Endothelial cell of umbilical vein (primary cell): ENCODE measurements at regions of chr21 and their contacts with region 1.

Region 1: DNA sequence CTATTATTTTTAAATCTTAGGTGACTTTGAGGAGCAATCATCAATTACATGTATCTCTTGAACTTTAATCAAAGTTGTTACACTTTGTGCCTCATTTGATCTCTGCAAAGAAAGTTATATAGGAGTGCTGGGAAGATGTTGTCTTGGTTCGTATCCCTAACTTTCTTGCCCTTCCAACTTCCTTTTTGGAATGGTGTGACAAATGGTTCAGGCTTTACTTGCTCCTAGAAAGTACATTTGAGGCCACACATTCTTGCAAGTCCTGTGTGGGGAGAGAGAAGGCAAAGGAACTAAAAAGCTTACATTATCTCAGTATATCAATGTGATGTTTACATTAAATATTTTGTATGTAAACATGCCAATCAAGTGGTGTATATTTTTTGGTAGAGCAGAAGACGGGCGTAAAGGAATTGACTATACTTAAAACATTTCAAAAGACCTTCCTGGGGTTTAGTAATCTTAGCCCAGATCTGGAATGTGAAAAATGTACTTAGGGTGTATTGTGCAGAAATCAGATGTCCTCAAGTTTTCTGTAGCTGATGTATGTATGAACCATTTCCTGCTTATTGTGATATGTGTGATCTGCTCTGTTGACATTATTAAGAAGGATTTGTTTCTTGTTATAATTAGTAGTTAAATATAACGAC is 59.2 kb downstream of the USP25 start:
- DNase-seq: peak; percentile 64
- H3K4me3 ChIP-seq: peak overlapping the region in 1 of 3 experiments; percentile 33
- H3K27ac ChIP-seq: peak overlapping the region; percentile 57
- H3K4me1 ChIP-seq: peaks cover 31% of the 10 kb centered on the region
- H3K27me3 ChIP-seq: no peaks in the 10 kb centered on the region
- CTCF ChIP-seq: no peak
- POLR2A ChIP-seq: no peak

Region 2: DNA sequence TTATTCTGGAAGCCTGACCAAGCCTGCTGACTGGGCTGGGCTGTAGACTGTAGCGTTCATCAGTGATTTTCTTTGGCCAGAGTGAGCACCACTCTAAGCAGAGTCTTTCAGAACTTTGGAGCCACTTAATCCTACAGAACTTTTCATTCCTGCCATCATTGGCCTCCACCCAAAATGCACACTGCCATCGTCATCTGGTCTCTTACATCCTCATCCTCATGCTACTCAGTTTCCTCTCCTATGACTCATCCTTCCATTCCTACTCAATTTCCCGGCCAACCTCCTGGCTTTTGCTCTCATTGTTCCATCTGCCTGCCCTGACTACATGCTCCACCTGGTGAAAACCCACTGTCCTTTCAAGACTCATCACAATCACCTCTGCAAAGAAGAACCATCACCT is 293.0 kb before region 1 on chr21:
- CTCF ChIA-PET with region 1: no interaction called
- POLR2A ChIA-PET with region 1: no interaction called
- dilution Hi-C with region 1: no loop called
- intact Hi-C with region 1: no loop called
- DNase-seq: peak; percentile 43
- H3K4me3 ChIP-seq: no peak overlapping the region
- H3K27ac ChIP-seq: no peak overlapping the region
- H3K4me1 ChIP-seq: no peaks in the 10 kb centered on the region
- H3K27me3 ChIP-seq: no peaks in the 10 kb centered on the region
- CTCF ChIP-seq: no peak
- POLR2A ChIP-seq: no peak

Region 3: GRCh38 chr21:15742052-15742670 is 46.8 kb before region 1 on chr21:
- CTCF ChIA-PET with region 1: no interaction called
- POLR2A ChIA-PET with region 1: no interaction called
- dilution Hi-C with region 1: no loop called
- intact Hi-C with region 1: loop called (anchors 1 kb)
- DNase-seq: peak; percentile 55
- H3K4me3 ChIP-seq: no peak overlapping the region
- H3K27ac ChIP-seq: no peak overlapping the region
- H3K4me1 ChIP-seq: peaks cover 39% of the 10 kb centered on the region
- H3K27me3 ChIP-seq: no peaks in the 10 kb centered on the region
- CTCF ChIP-seq: no peak
- POLR2A ChIP-seq: no peak

Region 4: DNA sequence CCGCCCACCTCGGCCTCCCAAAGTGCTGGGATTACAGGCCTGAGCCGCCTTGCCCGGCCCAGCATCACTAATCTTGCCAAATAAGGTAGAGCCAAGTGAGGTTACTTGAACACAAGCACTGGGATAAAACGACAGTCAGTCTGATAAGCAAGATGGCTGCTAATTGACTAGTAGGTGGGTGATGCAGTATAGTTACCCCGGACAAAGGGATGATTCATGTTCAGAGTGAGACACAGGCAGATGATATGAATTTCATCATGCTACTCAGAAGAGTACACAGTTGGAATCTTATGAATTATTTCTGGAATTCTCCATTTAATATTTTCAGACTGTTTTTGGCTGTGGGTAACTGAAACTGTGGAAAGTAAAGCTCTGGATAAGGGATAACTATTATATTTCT is 119.2 kb after region 1 on chr21:
- CTCF ChIA-PET with region 1: no interaction called
- POLR2A ChIA-PET with region 1: no interaction called
- dilution Hi-C with region 1: no loop called
- intact Hi-C with region 1: no loop called
- DNase-seq: no peak
- H3K4me3 ChIP-seq: no peak overlapping the region
- H3K27ac ChIP-seq: no peak overlapping the region
- H3K4me1 ChIP-seq: no peaks in the 10 kb centered on the region
- H3K27me3 ChIP-seq: no peaks in the 10 kb centered on the region
- CTCF ChIP-seq: no peak
- POLR2A ChIP-seq: no peak